ENCODE measurements at regions of chr1 and their contacts with region 1.

Region 1: GRCh38 chr1:53326088-53326597 is 1.7 kb downstream of the LRP8 start:
- DNase-seq: peak; percentile 98
- ATAC-seq: peak; percentile 87
- H3K4me3 Mint-ChIP-seq: peak overlapping the region; percentile 97
- H3K27ac Mint-ChIP-seq: peak overlapping the region; percentile 97
- H3K4me1 Mint-ChIP-seq: peaks cover 19% of the 10 kb centered on the region
- H3K27me3 Mint-ChIP-seq: no peaks in the 10 kb centered on the region
- CTCF ChIP-seq: no peak

Region 2: GRCh38 chr1:53315456-53316423 is 10.4 kb before region 1 on chr1:
- CTCF ChIA-PET with region 1: no interaction called
- POLR2A ChIA-PET with region 1: interaction called, 20 read pairs
- intact Hi-C with region 1: no loop called
- DNase-seq: no peak
- ATAC-seq: no peak
- H3K4me3 Mint-ChIP-seq: no peak overlapping the region
- H3K27ac Mint-ChIP-seq: peak overlapping the region; percentile 1
- H3K4me1 Mint-ChIP-seq: peaks cover 7% of the 10 kb centered on the region
- H3K27me3 Mint-ChIP-seq: no peaks in the 10 kb centered on the region
- CTCF ChIP-seq: no peak

Region 3: GRCh38 chr1:53367503-53368304 is 41.6 kb after region 1 on chr1:
- CTCF ChIA-PET with region 1: no interaction called
- POLR2A ChIA-PET with region 1: interaction called, 14 read pairs
- intact Hi-C with region 1: no loop called
- DNase-seq: peak; percentile 63
- ATAC-seq: peak; percentile 93
- H3K4me3 Mint-ChIP-seq: peak overlapping the region; percentile 56
- H3K27ac Mint-ChIP-seq: peak overlapping the region; percentile 73
- H3K4me1 Mint-ChIP-seq: peaks cover 15% of the 10 kb centered on the region
- H3K27me3 Mint-ChIP-seq: no peaks in the 10 kb centered on the region
- CTCF ChIP-seq: no peak

Region 4: GRCh38 chr1:53393325-53393792 is 67.2 kb after region 1 on chr1:
- CTCF ChIA-PET with region 1: interaction called, 8 read pairs
- POLR2A ChIA-PET with region 1: interaction called, 4 read pairs
- intact Hi-C with region 1: loop called (anchors 5 kb)
- DNase-seq: peak; percentile 74
- ATAC-seq: peak; percentile 92
- H3K4me3 Mint-ChIP-seq: no peak overlapping the region
- H3K27ac Mint-ChIP-seq: no peak overlapping the region
- H3K4me1 Mint-ChIP-seq: no peaks in the 10 kb centered on the region
- H3K27me3 Mint-ChIP-seq: no peaks in the 10 kb centered on the region
- CTCF ChIP-seq: peak; percentile 95

Region 5: DNA sequence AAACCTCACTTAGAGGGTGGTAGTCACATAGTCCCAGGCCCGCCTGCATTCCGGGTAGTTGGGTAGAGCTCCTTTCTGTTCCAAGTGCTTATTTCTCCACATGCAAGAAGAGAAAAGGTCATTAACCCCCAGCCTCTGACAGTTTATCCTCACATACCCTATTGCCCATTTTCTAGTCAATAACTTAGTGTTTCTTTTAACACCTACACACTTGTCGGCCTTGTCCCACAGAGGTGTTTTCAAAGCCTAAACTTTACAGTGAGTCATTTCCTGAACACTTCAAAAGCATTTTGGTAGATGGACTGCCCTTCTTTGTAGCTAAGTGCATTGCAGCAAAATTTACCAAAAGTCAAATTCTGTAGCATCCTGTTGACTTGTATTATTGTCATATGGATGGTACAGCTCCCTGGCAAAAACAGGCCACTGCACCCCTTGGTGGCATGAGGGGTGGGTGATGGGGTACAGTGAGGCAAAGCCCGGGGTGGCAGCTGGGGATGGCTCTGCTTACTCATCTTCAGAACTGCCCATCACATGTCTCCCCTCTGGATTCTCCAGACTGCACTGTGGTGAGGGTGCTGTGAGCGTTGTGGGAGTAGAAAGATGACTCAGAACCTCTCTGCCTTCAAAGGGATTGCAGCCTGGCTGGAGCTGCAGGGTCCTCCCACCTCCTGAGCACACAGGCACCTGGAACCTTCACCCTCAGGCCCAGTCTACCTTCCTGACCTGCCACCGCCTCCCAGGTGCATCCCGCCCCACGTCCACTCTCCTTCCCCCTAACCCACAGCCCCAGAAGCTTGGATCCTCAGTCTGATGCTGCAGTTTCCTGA is 87.2 kb after region 1 on chr1:
- CTCF ChIA-PET with region 1: interaction called, 3 read pairs
- POLR2A ChIA-PET with region 1: interaction called, 20 read pairs
- intact Hi-C with region 1: no loop called
- DNase-seq: peak; percentile 81
- ATAC-seq: peak; percentile 76
- H3K4me3 Mint-ChIP-seq: peak overlapping the region; percentile 42
- H3K27ac Mint-ChIP-seq: peak overlapping the region; percentile 97
- H3K4me1 Mint-ChIP-seq: peaks cover 68% of the 10 kb centered on the region
- H3K27me3 Mint-ChIP-seq: no peaks in the 10 kb centered on the region
- CTCF ChIP-seq: no peak

Measured in activated CD8-positive, alpha-beta T cell treated with anti-CD3 and anti-CD28 coated beads for 36 hours (primary cell).